Heart left ventricle (tissue), 16 donors: ENCODE measurements at regions of chr1 and their contacts with region 1.

Region 1: GRCh38 chr1:78627321-78627720 is 7.1 kb downstream of the IFI44L start:
- DNase-seq: no peak
- ATAC-seq: no peak
- H3K4me3 ChIP-seq: no peak overlapping the region
- H3K27ac ChIP-seq: no peak overlapping the region
- H3K4me1 ChIP-seq: peaks cover 0 to 46% (median 5%) of the 10 kb centered on the region in 12 donors
- H3K27me3 ChIP-seq: no peaks in the 10 kb centered on the region
- CTCF ChIP-seq: no peak
- POLR2A ChIP-seq: no peak

Region 2: DNA sequence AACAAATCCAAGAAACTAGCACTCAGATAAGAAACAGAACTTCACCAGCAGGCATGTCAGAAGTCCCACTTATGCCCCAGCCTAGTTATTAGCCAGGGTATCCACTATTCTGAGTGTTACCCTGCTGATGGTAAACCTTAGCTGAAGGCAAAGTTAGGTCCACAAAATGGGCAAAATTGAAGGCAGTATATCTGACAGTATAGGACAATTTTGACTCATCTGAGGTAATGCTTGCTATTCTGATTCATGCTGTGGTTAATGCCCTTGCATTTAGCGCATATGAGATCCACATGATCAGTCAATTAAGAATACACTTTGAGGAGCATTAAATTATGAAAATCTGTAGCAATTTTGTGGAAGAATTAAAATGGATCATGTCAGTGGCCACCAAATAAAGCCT is 37.4 kb after region 1 on chr1:
- intact Hi-C with region 1: loop called in 1 of 10 experiments (anchors 5 kb)
- DNase-seq: no peak
- ATAC-seq: no peak
- H3K4me3 ChIP-seq: no peak overlapping the region
- H3K27ac ChIP-seq: no peak overlapping the region
- H3K4me1 ChIP-seq: peaks cover 0 to under 1% (median 0%) of the 10 kb centered on the region in 12 donors
- H3K27me3 ChIP-seq: no peaks in the 10 kb centered on the region
- CTCF ChIP-seq: no peak
- POLR2A ChIP-seq: no peak